Ascending aorta (tissue), 2 donors: ENCODE measurements at regions of chr17 and their contacts with region 1.

Region 1: DNA sequence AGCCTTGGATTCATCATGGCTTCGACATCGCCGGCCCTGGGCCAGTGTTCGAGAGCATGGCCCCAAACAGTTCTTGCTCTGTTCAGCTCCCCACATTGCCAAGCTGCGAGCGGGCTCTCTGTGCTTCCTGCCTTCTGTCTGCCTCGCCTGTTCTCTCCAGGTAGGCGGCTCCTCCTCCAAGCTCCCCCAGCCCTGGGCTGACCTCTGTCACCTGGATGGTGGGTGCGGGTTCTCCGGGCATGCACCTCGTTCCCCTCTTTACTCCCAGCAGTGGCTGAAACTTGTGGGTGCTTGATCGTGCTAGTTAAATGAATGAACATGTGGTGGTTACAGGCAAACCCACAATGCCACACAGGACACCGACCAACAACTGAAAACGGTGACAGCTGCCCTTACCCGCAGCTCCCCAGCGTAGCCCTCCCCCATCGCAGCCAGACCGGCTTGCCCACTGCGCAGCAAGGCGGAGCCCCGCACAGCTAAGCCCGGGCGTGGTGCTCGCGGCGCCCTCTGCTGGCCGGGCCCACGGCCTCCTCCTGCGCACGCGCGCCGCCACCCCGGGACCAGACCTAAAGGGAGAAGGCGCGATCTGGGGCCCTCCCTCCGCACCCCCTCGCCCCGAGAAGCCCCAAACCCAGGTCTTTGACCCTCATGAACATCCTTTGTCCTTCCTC is 23.0 kb upstream of the EIF1 start:
- DNase-seq: peak; percentile 38 to 93
- H3K4me3 ChIP-seq: peak overlapping the region; percentile 52 to 72
- H3K27ac ChIP-seq: peak overlapping the region; percentile 82 to 85
- H3K4me1 ChIP-seq: peaks cover 0 to 14% of the 10 kb centered on the region in 2 donors
- H3K27me3 ChIP-seq: no peaks in the 10 kb centered on the region
- CTCF ChIP-seq: peak; percentile 94 to 96 (median 95)

Region 2: GRCh38 chr17:40647624-40648383 is 1017.9 kb before region 1 on chr17 and contains the start of gene SMARCE1:
- intact Hi-C with region 1: loop called (anchors 10 kb)
- DNase-seq: peak in 1 of 2 donors; percentile 80
- H3K4me3 ChIP-seq: peak within 1 kb of the TSS; percentile 79 to 96
- H3K27ac ChIP-seq: peak within 1 kb of the TSS; percentile 98 to 99
- H3K4me1 ChIP-seq: peaks cover 15 to 31% of the 10 kb centered on the region in 2 donors
- H3K27me3 ChIP-seq: no peaks in the 10 kb centered on the region
- CTCF ChIP-seq: no peak
- total RNA-seq, gene SMARCE1: 147 TPM

Region 3: DNA sequence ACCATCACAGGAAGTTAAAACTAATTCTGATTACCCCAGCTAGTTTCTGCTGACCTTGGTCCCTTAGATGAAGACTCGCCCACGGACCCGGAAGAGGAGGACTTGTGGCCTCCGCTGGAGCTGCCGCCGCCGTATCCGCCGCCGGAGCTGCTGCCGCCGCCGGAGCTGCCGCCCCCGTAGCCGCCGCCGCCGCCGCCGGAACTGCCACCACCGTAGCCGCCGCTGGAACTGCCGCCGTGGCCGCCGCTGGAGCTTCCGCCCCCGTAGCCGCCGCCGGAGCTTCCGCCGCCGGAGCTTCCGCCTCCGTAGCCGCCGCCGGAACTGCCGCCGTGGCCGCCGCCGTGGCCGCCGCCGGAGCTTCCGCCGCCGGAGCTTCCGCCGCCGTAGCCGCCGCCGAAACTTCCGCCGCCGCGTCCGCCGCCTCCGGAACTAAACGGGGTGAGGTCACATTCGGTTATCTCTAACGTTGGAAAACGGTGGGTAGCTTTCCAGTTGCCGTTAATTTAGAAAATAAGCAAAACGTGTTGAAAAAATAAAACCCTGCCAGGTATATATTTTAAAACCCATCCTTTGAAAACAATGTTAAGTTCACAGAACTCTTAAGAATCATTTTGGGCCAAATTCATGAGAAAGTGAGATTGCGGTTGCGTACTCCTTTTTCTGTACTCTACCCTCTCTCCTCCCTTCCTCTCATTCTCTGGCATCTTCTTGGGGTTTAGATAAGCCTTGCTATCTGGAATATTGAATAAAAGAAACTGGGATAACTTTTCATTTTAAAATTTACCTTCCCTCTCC is 846.8 kb before region 1 on chr17:
- intact Hi-C with region 1: loop called (anchors 5 kb)
- DNase-seq: peak; percentile 9 to 86
- H3K4me3 ChIP-seq: peak overlapping the region; percentile 79 to 92
- H3K27ac ChIP-seq: peak overlapping the region; percentile 81 to 91
- H3K4me1 ChIP-seq: peaks cover 0 to 8% of the 10 kb centered on the region in 2 donors
- H3K27me3 ChIP-seq: no peaks in the 10 kb centered on the region
- CTCF ChIP-seq: no peak

Region 4: DNA sequence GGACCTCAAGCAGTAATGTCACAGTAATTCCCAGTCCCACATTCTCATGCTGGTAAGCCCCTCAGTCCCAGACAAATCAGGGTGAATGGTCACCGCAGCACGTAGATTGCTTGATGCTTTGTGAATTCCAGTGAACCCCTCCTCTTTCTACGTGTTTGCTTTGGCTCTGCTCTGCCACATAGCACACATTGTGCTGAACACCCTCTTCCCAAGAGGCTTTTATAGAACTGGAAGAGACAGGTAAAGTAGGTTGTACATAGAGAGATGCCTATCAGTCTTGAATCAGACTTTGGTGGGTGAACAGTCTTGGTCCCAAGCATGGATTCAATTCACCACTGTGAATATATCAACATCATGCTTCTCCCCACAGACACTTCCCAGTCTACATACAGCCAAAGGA is 401.1 kb before region 1 on chr17:
- intact Hi-C with region 1: no loop called
- DNase-seq: no peak
- H3K4me3 ChIP-seq: no peak overlapping the region
- H3K27ac ChIP-seq: no peak overlapping the region
- H3K4me1 ChIP-seq: no peaks in the 10 kb centered on the region
- H3K27me3 ChIP-seq: no peaks in the 10 kb centered on the region
- CTCF ChIP-seq: no peak

Region 5: GRCh38 chr17:41548844-41549595 is 116.7 kb before region 1 on chr17:
- intact Hi-C with region 1: loop called (anchors 1 kb)
- DNase-seq: peak; percentile 27 to 91
- H3K4me3 ChIP-seq: peak overlapping the region; percentile 24 to 50
- H3K27ac ChIP-seq: peak overlapping the region; percentile 65 to 81
- H3K4me1 ChIP-seq: peaks cover 11 to 15% of the 10 kb centered on the region in 2 donors
- H3K27me3 ChIP-seq: no peaks in the 10 kb centered on the region
- CTCF ChIP-seq: peak; percentile 76 to 81 (median 80)

Region 6: GRCh38 chr17:41688699-41689496 is 23.2 kb after region 1 on chr17 and contains the start of gene EIF1:
- intact Hi-C with region 1: loop called (anchors 1 kb)
- DNase-seq: peak; percentile 98 to 100
- H3K4me3 ChIP-seq: peak within 1 kb of the TSS; percentile 74 to 93
- H3K27ac ChIP-seq: peak within 1 kb of the TSS; percentile 100
- H3K4me1 ChIP-seq: peaks cover 12 to 20% of the 10 kb centered on the region in 2 donors
- H3K27me3 ChIP-seq: no peaks in the 10 kb centered on the region
- CTCF ChIP-seq: peak in 1 of 3 experiments; percentile 19
- total RNA-seq, gene EIF1: 102 TPM